ENCODE measurements at regions of chr17 and their contacts with region 1.

Region 1: DNA sequence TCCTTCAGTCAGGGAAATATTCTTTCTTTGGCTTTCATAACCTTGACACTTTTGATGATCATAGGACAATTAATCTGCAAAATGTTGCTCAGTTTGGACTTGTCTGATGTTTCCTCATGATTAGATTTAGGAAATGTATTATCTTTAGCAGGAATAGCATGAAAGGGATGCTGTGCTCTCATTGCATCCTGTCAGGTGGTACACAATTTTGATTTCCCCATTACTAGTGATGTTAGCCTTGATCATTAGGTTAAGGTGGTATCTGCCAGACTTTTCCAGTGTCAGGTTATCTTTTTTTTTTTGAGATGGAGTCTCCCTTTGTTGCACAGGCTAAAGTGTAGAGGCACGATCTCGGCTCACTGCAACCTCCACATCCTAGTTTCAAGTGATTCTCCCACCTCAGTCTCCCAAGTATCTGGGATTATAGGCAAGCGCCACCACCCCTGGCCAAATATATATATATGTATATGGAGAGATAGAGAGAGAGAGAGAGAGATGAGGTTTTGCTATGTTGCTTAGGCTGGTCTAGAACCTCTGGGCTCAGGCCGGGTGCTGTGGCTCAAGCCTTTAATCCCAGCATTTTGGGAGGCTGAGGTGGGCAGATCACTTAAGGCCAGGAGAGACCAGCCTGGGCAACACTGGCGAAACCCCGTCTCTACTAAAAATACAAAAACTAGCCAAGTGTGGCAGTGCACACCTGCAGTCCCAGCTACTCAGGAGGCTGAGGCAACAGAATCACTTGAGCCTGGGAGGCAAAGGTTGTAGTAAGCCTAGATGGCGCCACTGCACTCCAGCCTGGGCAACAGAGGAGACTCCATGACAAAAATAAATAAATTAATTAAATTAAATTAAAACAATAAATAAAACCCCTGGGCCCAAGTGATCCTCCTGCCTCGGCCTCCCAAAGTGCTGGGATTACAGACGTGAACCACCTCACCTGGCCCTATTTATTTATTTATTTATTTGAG is 15.8 kb upstream of the CAVIN1 start:
- DNase-seq: no peak
- ATAC-seq: peak; percentile 82
- H3K4me3 ChIP-seq: no peak overlapping the region
- H3K27ac ChIP-seq: no peak overlapping the region
- H3K4me1 ChIP-seq: 0 out of 2 replicates have a peak, but pooled peaks cover 4% of the 10 kb centered on the region
- H3K27me3 ChIP-seq: no peaks in the 10 kb centered on the region
- CTCF ChIP-seq: peak; percentile 30 to 56 (median 47); a peak in 5 of 6 replicates
- EP300 ChIP-seq: no peak
- POLR2A ChIP-seq: no peak
- RAD21 ChIP-seq: peak; percentile 61

Region 2: GRCh38 chr17:42453439-42453838 is 14.6 kb after region 1 on chr17:
- CTCF ChIA-PET with region 1: interaction called, 21 read pairs
- POLR2A ChIA-PET with region 1: interaction called, 9 read pairs
- RAD21 ChIA-PET with region 1: interaction called, 13 read pairs
- SMC1A ChIA-PET with region 1: interaction called, 22 read pairs
- in situ Hi-C with region 1: no loop called
- intact Hi-C with region 1: no loop called
- DNase-seq: no peak
- ATAC-seq: peak; percentile 23; the same call in 2 of the 3 replicates
- H3K4me3 ChIP-seq: no peak overlapping the region
- H3K27ac ChIP-seq: no peak overlapping the region
- H3K4me1 ChIP-seq: peaks cover 27% of the 10 kb centered on the region
- H3K27me3 ChIP-seq: no peaks in the 10 kb centered on the region
- CTCF ChIP-seq: no peak
- EP300 ChIP-seq: no peak
- POLR2A ChIP-seq: no peak
- RAD21 ChIP-seq: no peak

Region 3: GRCh38 chr17:42459256-42459800 is 20.4 kb after region 1 on chr17:
- CTCF ChIA-PET with region 1: interaction called, 22 read pairs
- POLR2A ChIA-PET with region 1: interaction called, 9 read pairs
- RAD21 ChIA-PET with region 1: interaction called, 20 read pairs
- SMC1A ChIA-PET with region 1: interaction called, 22 read pairs
- in situ Hi-C with region 1: no loop called
- intact Hi-C with region 1: no loop called
- DNase-seq: no peak
- ATAC-seq: peak; percentile 57
- H3K4me3 ChIP-seq: peak overlapping the region; percentile 88
- H3K27ac ChIP-seq: peak overlapping the region; percentile 81
- H3K4me1 ChIP-seq: peaks cover 16% of the 10 kb centered on the region
- H3K27me3 ChIP-seq: no peaks in the 10 kb centered on the region
- CTCF ChIP-seq: peak; percentile 51 to 54 (median 54)
- EP300 ChIP-seq: no peak
- POLR2A ChIP-seq: no peak
- RAD21 ChIP-seq: no peak

Region 4: DNA sequence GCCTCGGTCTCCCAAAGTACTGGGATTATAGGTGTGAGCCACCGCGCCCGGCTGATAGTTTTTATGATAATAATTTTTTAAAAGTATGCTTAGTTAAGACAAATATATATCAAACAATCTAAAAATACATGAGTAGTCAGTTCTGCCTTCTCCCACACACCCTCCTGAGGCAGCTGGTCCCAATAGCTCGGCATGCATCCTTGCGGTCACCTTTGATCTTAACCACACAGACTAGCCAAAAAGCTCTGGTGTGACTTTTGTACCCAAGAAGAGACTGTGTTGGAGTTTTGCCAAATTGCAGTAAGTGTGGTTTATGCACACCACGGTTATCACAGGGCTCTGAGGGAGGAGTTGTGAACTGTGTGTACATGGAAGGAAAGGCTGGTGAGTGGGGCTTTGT is 45.4 kb after region 1 on chr17:
- CTCF ChIA-PET with region 1: interaction called, 4 read pairs
- POLR2A ChIA-PET with region 1: interaction called, 4 read pairs
- RAD21 ChIA-PET with region 1: interaction called, 3 read pairs
- SMC1A ChIA-PET with region 1: interaction called, 13 read pairs
- in situ Hi-C with region 1: no loop called
- intact Hi-C with region 1: no loop called
- DNase-seq: peak; percentile 70
- ATAC-seq: peak; percentile 92
- H3K4me3 ChIP-seq: no peak overlapping the region
- H3K27ac ChIP-seq: no peak overlapping the region
- H3K4me1 ChIP-seq: no peaks in the 10 kb centered on the region
- H3K27me3 ChIP-seq: no peaks in the 10 kb centered on the region
- CTCF ChIP-seq: no peak
- EP300 ChIP-seq: peak; percentile 34 to 43; a peak in 1 of 4 replicates
- POLR2A ChIP-seq: no peak
- RAD21 ChIP-seq: no peak

Region 5: DNA sequence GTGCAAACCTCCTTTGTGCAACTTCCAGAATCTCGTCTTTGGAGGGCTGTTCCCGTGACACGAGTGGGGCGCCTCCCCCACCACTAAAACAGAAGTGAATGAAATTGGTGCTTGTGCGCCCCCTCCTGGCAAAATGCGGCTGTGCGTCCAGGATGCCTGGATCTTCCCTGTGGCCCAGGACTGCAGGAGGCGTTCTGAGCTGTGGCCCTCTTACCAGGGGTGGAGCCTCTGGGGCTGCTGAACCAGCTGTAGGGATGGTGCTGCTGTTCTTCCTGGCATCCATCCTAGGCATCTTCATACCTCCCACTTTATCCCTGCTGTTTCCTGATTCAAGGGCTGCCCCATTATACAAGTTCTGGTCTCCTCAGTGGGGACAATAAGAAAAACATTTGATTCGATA is 78.6 kb after region 1 on chr17:
- CTCF ChIA-PET with region 1: interaction called, 120 read pairs
- POLR2A ChIA-PET with region 1: no interaction called
- RAD21 ChIA-PET with region 1: interaction called, 11 read pairs
- SMC1A ChIA-PET with region 1: interaction called, 13 read pairs
- in situ Hi-C with region 1: loop called (anchors 5 kb)
- intact Hi-C with region 1: no loop called
- DNase-seq: no peak
- ATAC-seq: peak; percentile 85
- H3K4me3 ChIP-seq: no peak overlapping the region
- H3K27ac ChIP-seq: no peak overlapping the region
- H3K4me1 ChIP-seq: peaks cover 4% of the 10 kb centered on the region
- H3K27me3 ChIP-seq: no peaks in the 10 kb centered on the region
- CTCF ChIP-seq: peak; percentile 93 to 98 (median 98); a peak in 5 of 6 replicates
- EP300 ChIP-seq: no peak
- POLR2A ChIP-seq: no peak
- RAD21 ChIP-seq: peak; percentile 85